ENCODE measurements at regions of chr12 and their contacts with region 1.

Region 1: GRCh38 chr12:115660211-115660805 is 617.2 kb downstream of the MED13L start:
- DNase-seq: peak in 1 of 2 donors; percentile 75
- H3K4me3 ChIP-seq: no peak overlapping the region
- H3K27ac ChIP-seq: peak overlapping the region; percentile 89 to 91
- H3K4me1 ChIP-seq: peaks cover 5 to 34% of the 10 kb centered on the region in 2 donors
- H3K27me3 ChIP-seq: no peaks in the 10 kb centered on the region
- CTCF ChIP-seq: no peak

Region 2: DNA sequence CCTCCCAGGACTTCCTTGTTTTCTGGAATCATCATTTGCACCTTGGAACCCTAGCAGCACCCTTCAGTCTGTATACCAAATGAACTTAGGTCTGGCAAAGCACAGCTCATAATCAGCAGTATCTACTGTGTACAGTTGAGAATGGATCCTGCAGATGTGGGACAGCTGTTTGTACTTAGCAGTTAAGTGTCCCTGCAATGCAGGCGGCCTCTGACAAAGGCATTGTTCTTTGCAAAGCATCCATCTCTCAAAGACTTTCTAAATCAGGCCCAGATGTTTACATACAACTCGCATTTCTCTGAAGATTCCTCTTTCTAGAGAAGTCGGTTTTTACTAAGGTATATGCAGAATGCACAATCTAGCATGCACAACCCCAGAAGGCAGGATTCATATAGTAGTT is 1523.7 kb before region 1 on chr12:
- intact Hi-C with region 1: no loop called
- DNase-seq: no peak
- H3K4me3 ChIP-seq: no peak overlapping the region
- H3K27ac ChIP-seq: no peak overlapping the region
- H3K4me1 ChIP-seq: no peaks in the 10 kb centered on the region
- H3K27me3 ChIP-seq: no peaks in the 10 kb centered on the region
- CTCF ChIP-seq: no peak

Region 3: GRCh38 chr12:114684098-114684869 is 976.0 kb before region 1 on chr12 and contains the start of gene TBX3:
- intact Hi-C with region 1: loop called (anchors 10 kb)
- DNase-seq: peak; percentile 73 to 95
- H3K4me3 ChIP-seq: peak within 1 kb of the TSS; percentile 75 to 79
- H3K27ac ChIP-seq: peak within 1 kb of the TSS; percentile 80 to 91
- H3K4me1 ChIP-seq: peaks cover 7 to 9% of the 10 kb centered on the region in 2 donors
- H3K27me3 ChIP-seq: peaks cover 9% of the 10 kb centered on the region
- CTCF ChIP-seq: peak in 2 of 3 experiments; percentile 42
- total RNA-seq, gene TBX3: 20.0 TPM

Region 4: DNA sequence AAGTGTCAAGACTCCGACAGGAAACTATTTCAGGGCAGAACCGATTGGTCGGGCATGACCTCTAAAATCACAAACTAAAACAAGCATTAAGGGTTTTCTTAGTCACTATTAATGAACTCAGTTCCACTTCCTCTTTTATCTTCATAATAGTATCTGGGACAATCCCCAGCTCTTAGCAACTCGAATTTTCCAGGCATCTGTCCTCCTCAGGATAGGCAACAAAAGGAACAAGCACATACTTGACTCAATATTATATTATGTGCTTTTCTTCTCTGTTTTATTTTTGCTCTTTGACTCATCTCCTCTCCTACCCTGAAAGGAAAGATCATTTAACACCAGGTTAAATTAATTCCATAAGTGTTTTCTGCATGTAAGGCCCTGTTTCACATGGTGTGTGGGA is 338.0 kb before region 1 on chr12:
- intact Hi-C with region 1: loop called (anchors 10 kb)
- DNase-seq: no peak
- H3K4me3 ChIP-seq: no peak overlapping the region
- H3K27ac ChIP-seq: no peak overlapping the region
- H3K4me1 ChIP-seq: peaks cover 6 to 18% of the 10 kb centered on the region in 2 donors
- H3K27me3 ChIP-seq: no peaks in the 10 kb centered on the region
- CTCF ChIP-seq: no peak

Region 5: GRCh38 chr12:115611477-115611876 is 48.8 kb before region 1 on chr12:
- intact Hi-C with region 1: no loop called
- DNase-seq: no peak
- H3K4me3 ChIP-seq: no peak overlapping the region
- H3K27ac ChIP-seq: no peak overlapping the region
- H3K4me1 ChIP-seq: peaks cover 0 to 3% of the 10 kb centered on the region in 2 donors
- H3K27me3 ChIP-seq: no peaks in the 10 kb centered on the region
- CTCF ChIP-seq: no peak

Region 6: GRCh38 chr12:115709540-115710011 is 49.3 kb after region 1 on chr12:
- intact Hi-C with region 1: loop called (anchors 2 kb)
- DNase-seq: peak in 1 of 2 donors; percentile 82
- H3K4me3 ChIP-seq: peak overlapping the region; percentile 18 to 24
- H3K27ac ChIP-seq: peak overlapping the region; percentile 42 to 50
- H3K4me1 ChIP-seq: peaks cover 0 to 9% of the 10 kb centered on the region in 2 donors
- H3K27me3 ChIP-seq: no peaks in the 10 kb centered on the region
- CTCF ChIP-seq: no peak